Vagina (tissue), 2 donors: ENCODE measurements at regions of chr12 and their contacts with region 1.

Region 1: DNA sequence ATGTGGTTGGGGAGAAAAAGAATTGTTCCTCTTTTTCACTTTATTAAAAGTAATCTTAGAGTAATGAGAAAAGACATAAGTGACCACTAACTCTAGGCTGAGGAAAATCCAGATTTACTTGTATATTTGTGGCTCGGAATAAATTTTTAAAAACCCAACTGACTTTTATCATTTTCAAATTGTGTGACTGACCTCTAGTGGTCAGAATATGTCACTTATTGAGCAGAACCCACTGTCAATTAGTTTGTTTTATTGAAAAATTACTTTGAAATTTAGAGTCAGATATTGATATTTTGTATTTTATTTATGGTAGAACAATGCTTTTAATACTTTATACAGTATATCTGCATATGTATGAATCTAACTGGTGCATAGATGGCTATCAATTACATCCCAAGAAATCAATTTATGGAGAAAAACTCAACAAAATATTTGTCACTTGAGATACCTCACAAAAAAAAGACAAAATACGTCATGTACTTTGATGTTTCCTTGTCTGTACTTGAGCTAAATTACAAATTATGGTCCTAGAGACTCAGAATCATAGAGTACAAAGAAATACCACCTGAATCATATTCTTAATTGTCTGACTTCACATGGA is 229.4 kb downstream of the CNTN1 start:
- DNase-seq: no peak
- H3K4me3 ChIP-seq: no peak overlapping the region
- H3K27ac ChIP-seq: no peak overlapping the region
- H3K4me1 ChIP-seq: no peaks in the 10 kb centered on the region
- H3K27me3 ChIP-seq: no peaks in the 10 kb centered on the region
- CTCF ChIP-seq: peak; percentile 16 to 65 (median 52)
- POLR2A ChIP-seq: no peak

Region 2: DNA sequence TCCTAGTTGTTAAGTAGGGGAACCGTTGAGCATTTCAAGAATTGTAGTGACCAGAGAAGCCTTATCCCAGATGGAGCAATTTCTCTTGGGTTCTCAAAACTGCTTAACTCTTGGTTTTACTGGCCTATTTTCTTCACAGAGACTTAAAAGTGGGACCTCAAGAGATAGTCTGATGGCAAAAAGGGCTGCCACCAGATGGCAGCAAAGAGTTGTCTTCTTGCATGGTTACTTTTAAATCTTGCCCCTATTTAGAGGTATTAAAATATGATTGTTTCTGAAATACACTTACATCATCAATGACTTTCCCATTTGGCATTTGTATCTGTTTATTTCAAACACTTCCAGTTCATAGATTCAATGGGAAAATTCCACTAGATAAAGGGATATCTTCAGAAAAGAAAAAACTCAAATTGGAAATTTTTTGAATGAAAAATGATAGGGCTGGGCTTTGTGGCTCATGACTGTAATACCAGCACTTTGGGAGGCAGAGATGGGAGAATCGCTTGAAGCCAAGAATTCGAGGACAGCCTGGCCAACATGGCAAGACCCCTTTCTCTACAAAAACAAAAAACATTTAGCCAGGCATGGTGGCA is 299.3 kb before region 1 on chr12:
- intact Hi-C with region 1: loop called (anchors 5 kb)
- DNase-seq: no peak
- H3K4me3 ChIP-seq: no peak overlapping the region
- H3K27ac ChIP-seq: no peak overlapping the region
- H3K4me1 ChIP-seq: no peaks in the 10 kb centered on the region
- H3K27me3 ChIP-seq: no peaks in the 10 kb centered on the region
- CTCF ChIP-seq: peak in 2 of 3 experiments; percentile 68 to 84
- POLR2A ChIP-seq: no peak

Region 3: DNA sequence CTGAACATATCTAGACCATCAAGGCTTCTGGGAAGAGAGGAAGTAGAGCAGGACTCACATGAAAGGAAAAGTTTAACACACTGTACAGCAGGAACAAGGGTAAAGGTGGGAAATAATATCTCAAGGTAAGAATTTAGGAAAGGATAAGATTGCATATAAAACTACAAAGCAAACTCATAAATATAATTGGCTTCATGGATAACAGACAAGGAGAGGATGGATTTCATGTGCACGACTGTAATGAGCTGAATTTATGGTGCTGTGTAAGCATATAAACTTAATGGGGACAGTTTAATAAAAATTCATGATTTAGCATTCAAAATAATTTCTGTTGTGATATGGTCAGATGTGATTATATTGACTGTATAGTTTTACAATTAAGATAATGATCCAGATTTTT is 925.1 kb after region 1 on chr12:
- intact Hi-C with region 1: no loop called
- DNase-seq: no peak
- H3K4me3 ChIP-seq: no peak overlapping the region
- H3K27ac ChIP-seq: no peak overlapping the region
- H3K4me1 ChIP-seq: no peaks in the 10 kb centered on the region
- H3K27me3 ChIP-seq: no peaks in the 10 kb centered on the region
- CTCF ChIP-seq: no peak
- POLR2A ChIP-seq: no peak